ENCODE measurements at regions of chr14 and their contacts with region 1.

Region 1: GRCh38 chr14:34843011-34843554 is 32.1 kb downstream of the BAZ1A start:
- DNase-seq: peak; percentile 54
- H3K4me3 Mint-ChIP-seq: peak overlapping the region; percentile 9
- H3K27ac Mint-ChIP-seq: peak overlapping the region; percentile 81
- H3K4me1 Mint-ChIP-seq: peaks cover 21% of the 10 kb centered on the region
- H3K27me3 Mint-ChIP-seq: no peaks in the 10 kb centered on the region

Region 2: GRCh38 chr14:33692762-33693161 is 1150.3 kb before region 1 on chr14:
- CTCF ChIA-PET with region 1: no interaction called
- POLR2A ChIA-PET with region 1: no interaction called
- intact Hi-C with region 1: no loop called
- DNase-seq: no peak
- H3K4me3 Mint-ChIP-seq: no peak overlapping the region
- H3K27ac Mint-ChIP-seq: no peak overlapping the region
- H3K4me1 Mint-ChIP-seq: no peaks in the 10 kb centered on the region
- H3K27me3 Mint-ChIP-seq: no peaks in the 10 kb centered on the region

Region 3: DNA sequence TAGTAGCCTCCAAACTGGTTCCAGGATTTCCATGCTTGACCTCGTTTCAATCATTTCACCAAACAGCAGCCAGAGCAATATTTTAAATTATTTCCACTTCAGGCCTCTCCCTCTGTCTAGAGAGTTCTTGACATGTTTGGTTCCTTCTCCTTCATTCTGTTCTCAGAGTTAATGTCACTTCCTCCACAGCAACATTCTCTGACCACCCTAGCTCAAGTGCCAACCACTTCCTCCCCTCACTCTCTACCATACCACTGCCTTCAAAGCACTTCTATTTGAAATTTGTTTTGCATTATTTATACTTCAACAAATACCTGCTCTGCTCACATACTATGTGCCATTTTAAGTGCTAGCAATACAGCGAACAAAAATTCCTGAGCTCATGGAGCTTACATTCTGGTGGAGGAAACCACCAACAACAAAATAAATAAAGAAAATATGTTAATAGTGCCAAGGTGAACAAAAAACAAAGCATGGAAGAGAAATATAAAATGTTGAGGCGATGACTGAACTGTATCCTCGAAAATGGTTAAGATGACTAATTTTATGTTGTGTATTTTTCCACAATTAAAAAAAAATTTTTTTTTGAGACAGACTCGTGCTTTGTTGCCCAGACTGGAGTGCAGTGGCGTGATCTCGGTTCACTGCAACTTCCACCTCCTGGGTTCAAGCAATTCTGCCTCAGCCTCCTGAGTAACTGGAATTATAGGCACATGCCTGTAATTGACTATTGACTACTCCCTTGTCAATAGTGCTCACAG is 14.8 kb after region 1 on chr14:
- CTCF ChIA-PET with region 1: interaction called, 3 read pairs
- POLR2A ChIA-PET with region 1: no interaction called
- intact Hi-C with region 1: loop called (anchors 2 kb)
- DNase-seq: peak; percentile 37
- H3K4me3 Mint-ChIP-seq: no peak overlapping the region
- H3K27ac Mint-ChIP-seq: peak overlapping the region; percentile 75
- H3K4me1 Mint-ChIP-seq: peaks cover 31% of the 10 kb centered on the region
- H3K27me3 Mint-ChIP-seq: no peaks in the 10 kb centered on the region

Region 4: GRCh38 chr14:34875031-34875922 is 32.2 kb after region 1 on chr14 and contains the start of gene BAZ1A:
- CTCF ChIA-PET with region 1: interaction called, 3 read pairs
- POLR2A ChIA-PET with region 1: interaction called, 7 read pairs
- intact Hi-C with region 1: loop called (anchors 1 kb)
- DNase-seq: peak; percentile 52
- H3K4me3 Mint-ChIP-seq: peak within 1 kb of the TSS; percentile 100
- H3K27ac Mint-ChIP-seq: peak within 1 kb of the TSS; percentile 98
- H3K4me1 Mint-ChIP-seq: peaks cover 33% of the 10 kb centered on the region
- H3K27me3 Mint-ChIP-seq: no peaks in the 10 kb centered on the region
- total RNA-seq, gene BAZ1A: 67.8 to 68.0 TPM

Region 5: DNA sequence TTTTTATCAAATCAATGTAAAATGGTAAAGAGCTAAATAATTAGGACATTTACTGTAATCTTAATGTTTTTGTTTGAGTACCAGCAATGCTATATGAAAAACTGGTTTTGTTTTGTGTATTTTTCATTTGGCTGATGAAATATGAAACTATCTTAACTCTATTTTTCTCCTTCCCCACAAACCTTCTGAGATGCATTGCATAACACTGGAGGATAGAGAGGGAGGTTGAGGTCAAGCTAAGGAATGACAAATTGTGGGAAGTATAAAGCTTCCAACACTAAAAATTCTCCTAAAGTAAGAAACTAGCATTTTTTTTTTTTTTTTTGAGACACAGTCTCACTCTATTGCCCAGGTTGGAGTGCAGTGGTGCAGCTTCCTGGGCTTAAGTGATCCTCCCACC is 108.2 kb after region 1 on chr14:
- CTCF ChIA-PET with region 1: no interaction called
- POLR2A ChIA-PET with region 1: no interaction called
- intact Hi-C with region 1: no loop called
- DNase-seq: no peak
- H3K4me3 Mint-ChIP-seq: no peak overlapping the region
- H3K27ac Mint-ChIP-seq: no peak overlapping the region
- H3K4me1 Mint-ChIP-seq: no peaks in the 10 kb centered on the region
- H3K27me3 Mint-ChIP-seq: no peaks in the 10 kb centered on the region

Region 6: GRCh38 chr14:35301735-35302528 is 458.8 kb after region 1 on chr14:
- CTCF ChIA-PET with region 1: no interaction called
- POLR2A ChIA-PET with region 1: no interaction called
- intact Hi-C with region 1: loop called (anchors 10 kb)
- DNase-seq: no peak
- H3K4me3 Mint-ChIP-seq: peak overlapping the region; percentile 49
- H3K27ac Mint-ChIP-seq: peak overlapping the region; percentile 95
- H3K4me1 Mint-ChIP-seq: peaks cover 73% of the 10 kb centered on the region
- H3K27me3 Mint-ChIP-seq: no peaks in the 10 kb centered on the region

Region 7: DNA sequence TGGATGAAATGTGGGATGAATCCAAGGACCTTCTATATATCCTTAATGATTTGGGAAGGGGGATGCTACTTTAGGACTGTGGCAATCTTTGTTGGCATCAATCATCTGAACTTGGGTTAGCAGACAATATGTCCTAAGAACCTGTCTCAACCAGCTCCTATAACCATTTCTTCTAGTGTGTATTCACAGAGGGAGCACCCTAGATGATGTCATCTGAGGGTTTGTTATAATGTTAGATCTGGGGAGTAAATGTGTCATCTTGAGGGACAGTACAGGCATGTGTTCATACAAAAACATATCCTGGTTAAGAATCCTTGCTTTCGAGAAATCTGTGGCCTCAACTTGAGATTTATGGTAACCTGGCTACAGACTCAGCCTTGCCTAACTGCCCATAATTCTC is 603.4 kb after region 1 on chr14:
- CTCF ChIA-PET with region 1: no interaction called
- POLR2A ChIA-PET with region 1: no interaction called
- intact Hi-C with region 1: no loop called
- DNase-seq: no peak
- H3K4me3 Mint-ChIP-seq: no peak overlapping the region
- H3K27ac Mint-ChIP-seq: no peak overlapping the region
- H3K4me1 Mint-ChIP-seq: no peaks in the 10 kb centered on the region
- H3K27me3 Mint-ChIP-seq: no peaks in the 10 kb centered on the region

Measured in activated CD4-positive, alpha-beta memory T cell treated with anti-CD3 and anti-CD28 coated beads for 36 hours (primary cell).